CD4-positive, alpha-beta memory T cell (primary cell): ENCODE measurements at regions of chr1 and their contacts with region 1.

Region 1: GRCh38 chr1:180178511-180179161 is 24.0 kb downstream of the QSOX1 start:
- DNase-seq: peak; percentile 50 to 63 (median 53)
- H3K4me3 ChIP-seq: no peak overlapping the region
- H3K4me3 Mint-ChIP-seq: no peak overlapping the region
- H3K27ac ChIP-seq: no peak overlapping the region
- H3K27ac Mint-ChIP-seq: peak overlapping the region in 3 of 7 donors; percentile 38 to 86 (median 47)
- H3K4me1 ChIP-seq: no peaks in the 10 kb centered on the region
- H3K4me1 Mint-ChIP-seq: peaks cover 0 to 4% (median 0%) of the 10 kb centered on the region in 4 donors
- H3K27me3 ChIP-seq: no peaks in the 10 kb centered on the region
- H3K27me3 Mint-ChIP-seq: no peaks in the 10 kb centered on the region

Region 2: GRCh38 chr1:179706339-179706941 is 472.2 kb before region 1 on chr1:
- CTCF ChIA-PET with region 1: interaction called, 57 read pairs
- POLR2A ChIA-PET with region 1: no interaction called
- intact Hi-C with region 1: loop called (anchors 1 kb)
- DNase-seq: peak; percentile 56 to 66 (median 59)
- H3K4me3 ChIP-seq: no peak overlapping the region
- H3K4me3 Mint-ChIP-seq: no peak overlapping the region
- H3K27ac ChIP-seq: no peak overlapping the region
- H3K27ac Mint-ChIP-seq: peak overlapping the region; percentile 44 to 85 (median 76)
- H3K4me1 ChIP-seq: peaks cover 18% of the 10 kb centered on the region
- H3K4me1 Mint-ChIP-seq: peaks cover 5 to 22% (median 17%) of the 10 kb centered on the region in 4 donors
- H3K27me3 ChIP-seq: no peaks in the 10 kb centered on the region
- H3K27me3 Mint-ChIP-seq: peaks cover 0 to 5% of the 10 kb centered on the region in 2 donors

Region 3: DNA sequence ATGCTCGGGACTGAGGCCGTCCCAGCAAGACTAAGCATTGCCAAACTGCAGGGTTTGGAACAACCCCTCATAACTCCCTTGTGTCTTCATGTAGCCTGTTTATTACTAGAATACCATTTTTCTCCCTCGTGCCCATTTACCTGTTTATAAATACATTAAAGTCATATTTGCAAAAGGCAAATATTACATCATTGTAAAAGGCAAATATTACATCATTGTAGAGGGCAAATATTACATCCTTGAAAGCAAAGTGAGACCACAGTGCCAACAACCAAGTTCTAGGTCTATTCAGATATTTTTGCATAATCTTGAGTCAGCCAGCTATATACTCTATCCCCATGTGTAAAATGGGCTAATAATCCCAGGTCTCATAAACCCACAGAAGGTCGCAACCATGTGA is 447.0 kb before region 1 on chr1:
- CTCF ChIA-PET with region 1: no interaction called
- POLR2A ChIA-PET with region 1: no interaction called
- intact Hi-C with region 1: no loop called
- DNase-seq: no peak
- H3K4me3 ChIP-seq: no peak overlapping the region
- H3K4me3 Mint-ChIP-seq: no peak overlapping the region
- H3K27ac ChIP-seq: no peak overlapping the region
- H3K27ac Mint-ChIP-seq: no peak overlapping the region
- H3K4me1 ChIP-seq: no peaks in the 10 kb centered on the region
- H3K4me1 Mint-ChIP-seq: no peaks in the 10 kb centered on the region
- H3K27me3 ChIP-seq: no peaks in the 10 kb centered on the region
- H3K27me3 Mint-ChIP-seq: peaks cover 19 to 29% of the 10 kb centered on the region in 2 donors

Region 4: GRCh38 chr1:180020017-180020416 is 158.6 kb before region 1 on chr1:
- CTCF ChIA-PET with region 1: interaction called, 13 read pairs
- POLR2A ChIA-PET with region 1: no interaction called
- intact Hi-C with region 1: no loop called
- DNase-seq: no peak
- H3K4me3 ChIP-seq: no peak overlapping the region
- H3K4me3 Mint-ChIP-seq: no peak overlapping the region
- H3K27ac ChIP-seq: no peak overlapping the region
- H3K27ac Mint-ChIP-seq: no peak overlapping the region
- H3K4me1 ChIP-seq: no peaks in the 10 kb centered on the region
- H3K4me1 Mint-ChIP-seq: peaks cover 0 to 3% (median 0%) of the 10 kb centered on the region in 4 donors
- H3K27me3 ChIP-seq: no peaks in the 10 kb centered on the region
- H3K27me3 Mint-ChIP-seq: no peaks in the 10 kb centered on the region

Region 5: GRCh38 chr1:180085331-180085730 is 93.3 kb before region 1 on chr1:
- CTCF ChIA-PET with region 1: interaction called, 15 read pairs
- POLR2A ChIA-PET with region 1: no interaction called
- intact Hi-C with region 1: loop called (anchors 5 kb)
- DNase-seq: no peak
- H3K4me3 ChIP-seq: no peak overlapping the region
- H3K4me3 Mint-ChIP-seq: no peak overlapping the region
- H3K27ac ChIP-seq: no peak overlapping the region
- H3K27ac Mint-ChIP-seq: peak overlapping the region in 2 of 7 donors; percentile 0 to 15
- H3K4me1 ChIP-seq: no peaks in the 10 kb centered on the region
- H3K4me1 Mint-ChIP-seq: peaks cover 0 to 6% (median 0%) of the 10 kb centered on the region in 4 donors
- H3K27me3 ChIP-seq: no peaks in the 10 kb centered on the region
- H3K27me3 Mint-ChIP-seq: no peaks in the 10 kb centered on the region

Region 6: GRCh38 chr1:180101411-180101810 is 77.2 kb before region 1 on chr1:
- CTCF ChIA-PET with region 1: interaction called, 25 read pairs
- POLR2A ChIA-PET with region 1: no interaction called
- intact Hi-C with region 1: no loop called
- DNase-seq: no peak
- H3K4me3 ChIP-seq: no peak overlapping the region
- H3K4me3 Mint-ChIP-seq: no peak overlapping the region
- H3K27ac ChIP-seq: no peak overlapping the region
- H3K27ac Mint-ChIP-seq: peak overlapping the region in 2 of 7 donors; percentile 35 to 62
- H3K4me1 ChIP-seq: no peaks in the 10 kb centered on the region
- H3K4me1 Mint-ChIP-seq: peaks cover 0 to 4% (median 2%) of the 10 kb centered on the region in 4 donors
- H3K27me3 ChIP-seq: no peaks in the 10 kb centered on the region
- H3K27me3 Mint-ChIP-seq: no peaks in the 10 kb centered on the region

Region 7: DNA sequence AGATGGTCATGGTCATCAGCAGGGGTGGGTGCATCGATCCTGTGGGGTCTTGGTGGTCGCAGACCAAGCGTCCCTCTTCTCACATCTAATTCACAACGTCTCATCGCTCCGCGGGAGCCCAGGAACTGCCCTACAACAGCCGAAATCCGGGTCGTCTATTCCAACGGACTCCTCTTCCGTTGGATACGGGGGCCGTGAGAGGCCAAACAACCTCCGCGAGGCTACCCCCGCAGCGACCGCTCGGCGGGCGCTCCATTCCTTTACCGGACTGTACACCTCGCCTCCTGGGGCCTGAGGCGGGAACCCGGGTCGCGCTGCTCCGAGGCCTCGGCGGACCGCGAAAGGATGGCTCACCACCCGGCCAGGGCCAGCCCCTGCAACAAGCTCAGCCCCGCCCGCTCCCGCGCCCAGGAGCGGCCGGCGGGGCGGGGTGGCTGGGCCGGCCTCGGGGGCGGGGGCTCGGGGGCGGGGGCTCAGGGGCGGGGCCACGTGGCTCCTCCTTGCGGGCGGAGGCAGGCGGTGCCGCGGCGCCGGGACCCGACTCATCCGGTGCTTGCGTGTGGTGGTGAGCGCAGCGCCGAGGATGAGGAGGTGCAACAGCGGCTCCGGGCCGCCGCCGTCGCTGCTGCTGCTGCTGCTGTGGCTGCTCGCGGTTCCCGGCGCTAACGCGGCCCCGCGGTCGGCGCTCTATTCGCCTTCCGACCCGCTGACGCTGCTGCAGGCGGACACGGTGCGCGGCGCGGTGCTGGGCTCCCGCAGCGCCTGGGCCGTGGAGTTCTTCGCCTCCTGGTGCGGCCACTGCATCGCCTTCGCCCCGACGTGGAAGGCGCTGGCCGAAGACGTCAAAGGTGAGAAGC is 24.1 kb before region 1 on chr1 and contains the start of gene QSOX1:
- CTCF ChIA-PET with region 1: interaction called, 22 read pairs
- POLR2A ChIA-PET with region 1: interaction called, 3 read pairs
- intact Hi-C with region 1: no loop called
- DNase-seq: peak; percentile 88 to 91 (median 89)
- H3K4me3 ChIP-seq: peak within 1 kb of the TSS; percentile 87 to 94
- H3K4me3 Mint-ChIP-seq: peak within 1 kb of the TSS; percentile 89 to 94 (median 92)
- H3K27ac ChIP-seq: peak within 1 kb of the TSS; percentile 68
- H3K27ac Mint-ChIP-seq: peak within 1 kb of the TSS; percentile 85 to 94 (median 92)
- H3K4me1 ChIP-seq: peaks cover 27% of the 10 kb centered on the region
- H3K4me1 Mint-ChIP-seq: peaks cover 14 to 52% (median 34%) of the 10 kb centered on the region in 4 donors
- H3K27me3 ChIP-seq: no peaks in the 10 kb centered on the region
- H3K27me3 Mint-ChIP-seq: no peaks in the 10 kb centered on the region
- total RNA-seq, gene QSOX1: 19.1 to 25.1 TPM

Region 8: DNA sequence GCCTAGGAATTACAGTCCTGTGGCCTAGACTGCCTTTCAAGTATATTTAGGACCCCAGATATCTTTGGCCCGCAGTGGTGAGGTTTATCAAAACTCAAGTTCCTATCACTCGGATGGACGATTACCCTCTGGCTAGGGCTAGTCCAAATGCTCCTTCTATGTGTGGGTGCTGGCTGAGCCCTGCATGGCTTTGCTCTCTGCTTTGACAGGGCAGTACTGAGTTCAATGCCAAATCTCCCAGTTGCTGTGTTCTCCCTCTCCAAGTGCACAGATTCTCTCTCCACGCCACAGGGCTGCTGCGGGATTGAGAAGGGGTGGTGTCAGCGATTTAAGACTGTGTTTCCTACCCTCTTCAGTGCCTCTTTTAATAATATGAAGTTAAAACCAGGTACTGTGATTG is 148.5 kb after region 1 on chr1:
- CTCF ChIA-PET with region 1: no interaction called
- POLR2A ChIA-PET with region 1: no interaction called
- intact Hi-C with region 1: no loop called
- DNase-seq: no peak
- H3K4me3 ChIP-seq: no peak overlapping the region
- H3K4me3 Mint-ChIP-seq: no peak overlapping the region
- H3K27ac ChIP-seq: no peak overlapping the region
- H3K27ac Mint-ChIP-seq: no peak overlapping the region
- H3K4me1 ChIP-seq: no peaks in the 10 kb centered on the region
- H3K4me1 Mint-ChIP-seq: no peaks in the 10 kb centered on the region
- H3K27me3 ChIP-seq: no peaks in the 10 kb centered on the region
- H3K27me3 Mint-ChIP-seq: no peaks in the 10 kb centered on the region